CD14-positive monocyte (primary cell): ENCODE measurements at regions of chr9 and their contacts with region 1.

Region 1: GRCh38 chr9:87431517-87432236 is 66.0 kb upstream of the DAPK1 start:
- DNase-seq: no peak
- H3K4me3 ChIP-seq: no peak overlapping the region
- H3K4me3 Mint-ChIP-seq: no peak overlapping the region
- H3K27ac ChIP-seq: no peak overlapping the region
- H3K27ac Mint-ChIP-seq: no peak overlapping the region
- H3K4me1 ChIP-seq: no peaks in the 10 kb centered on the region
- H3K4me1 Mint-ChIP-seq: peaks cover 2% of the 10 kb centered on the region
- H3K27me3 ChIP-seq: no peaks in the 10 kb centered on the region
- H3K27me3 Mint-ChIP-seq: peaks cover 0 to 5% (median 0%) of the 10 kb centered on the region in 3 donors
- CTCF ChIP-seq: no peak

Region 2: DNA sequence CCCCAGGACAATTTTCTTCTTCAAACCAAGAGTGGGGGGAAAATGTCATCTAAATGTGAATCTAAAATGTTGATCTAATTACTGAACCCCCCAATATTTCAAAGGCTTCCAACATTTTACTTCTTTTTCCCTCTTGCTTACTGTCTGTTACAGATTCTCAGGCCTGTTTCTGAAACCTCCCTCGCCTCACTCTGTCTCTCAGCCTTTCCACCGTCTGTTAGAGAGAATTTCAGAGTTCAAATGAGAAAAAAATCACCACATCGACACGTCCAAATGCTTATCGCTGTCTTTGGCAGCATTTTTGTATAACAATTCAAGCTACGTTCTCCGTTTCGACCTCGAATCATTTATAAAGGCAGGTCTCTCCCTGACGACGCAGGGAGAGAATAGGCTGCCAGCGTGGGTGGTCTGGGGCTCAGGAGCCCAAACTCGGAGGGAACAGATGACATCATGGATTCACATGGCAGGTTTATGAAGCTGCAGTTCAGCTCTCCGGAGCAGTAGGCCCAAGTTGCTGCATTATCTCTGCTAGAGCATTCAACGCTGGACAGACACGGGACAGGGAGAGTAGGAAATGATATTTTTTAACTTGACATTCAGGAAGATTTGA is 624.2 kb before region 1 on chr9:
- intact Hi-C with region 1: no loop called
- DNase-seq: no peak
- H3K4me3 ChIP-seq: no peak overlapping the region
- H3K4me3 Mint-ChIP-seq: no peak overlapping the region
- H3K27ac ChIP-seq: no peak overlapping the region
- H3K27ac Mint-ChIP-seq: no peak overlapping the region
- H3K4me1 ChIP-seq: no peaks in the 10 kb centered on the region
- H3K4me1 Mint-ChIP-seq: no peaks in the 10 kb centered on the region
- H3K27me3 ChIP-seq: no peaks in the 10 kb centered on the region
- H3K27me3 Mint-ChIP-seq: peaks cover 0 to 3% (median 1%) of the 10 kb centered on the region in 3 donors
- CTCF ChIP-seq: no peak

Region 3: DNA sequence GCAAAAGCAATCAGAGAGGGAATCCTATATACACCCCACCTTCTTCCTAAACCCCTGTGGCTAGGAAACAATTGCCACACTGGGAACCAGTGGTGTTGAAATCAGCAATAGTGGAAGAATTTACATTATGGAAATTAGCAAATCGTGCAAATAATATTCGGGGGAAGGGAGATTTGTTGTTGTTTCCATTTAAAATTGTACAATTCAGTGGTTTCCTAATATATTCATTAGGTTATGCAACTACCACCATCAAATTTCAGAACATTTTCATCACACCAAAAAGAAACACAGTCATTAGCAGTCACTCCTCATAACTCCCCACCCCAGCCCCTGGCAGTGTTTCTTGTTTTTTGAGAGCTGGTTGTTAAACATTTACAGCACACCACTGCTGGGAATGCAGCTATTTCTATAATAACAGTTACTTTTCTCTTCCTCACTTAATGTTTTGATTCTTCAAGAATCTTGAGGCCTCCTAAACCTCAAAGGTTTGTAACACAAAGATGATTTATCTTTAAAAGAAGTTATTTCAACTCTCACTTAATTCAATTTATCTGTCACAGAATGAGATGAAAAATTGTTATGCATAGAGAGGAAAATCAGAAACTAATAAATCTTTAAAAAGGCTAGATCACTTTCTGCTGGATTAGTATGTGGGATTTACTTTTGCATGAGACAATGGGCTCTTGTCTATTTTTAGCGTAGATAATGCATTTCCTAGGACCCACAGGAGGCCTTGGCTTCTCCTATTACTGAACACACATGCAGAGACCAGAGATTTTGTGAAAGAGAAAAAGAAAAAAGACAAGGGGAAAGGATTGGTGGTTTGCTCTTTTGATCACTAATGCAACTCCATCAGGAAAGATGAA is 25.8 kb before region 1 on chr9:
- intact Hi-C with region 1: no loop called
- DNase-seq: peak; percentile 77 to 91 (median 86)
- H3K4me3 ChIP-seq: peak overlapping the region in 1 of 3 experiments; percentile 35
- H3K4me3 Mint-ChIP-seq: peak overlapping the region in 1 of 2 donors; percentile 54
- H3K27ac ChIP-seq: peak overlapping the region; percentile 49 to 93
- H3K27ac Mint-ChIP-seq: peak overlapping the region; percentile 91 to 97 (median 94)
- H3K4me1 ChIP-seq: peaks cover 30 to 36% of the 10 kb centered on the region in 2 donors
- H3K4me1 Mint-ChIP-seq: peaks cover 40% of the 10 kb centered on the region
- H3K27me3 ChIP-seq: no peaks in the 10 kb centered on the region
- H3K27me3 Mint-ChIP-seq: peaks cover 1 to 3% (median 2%) of the 10 kb centered on the region in 3 donors
- CTCF ChIP-seq: no peak

Region 4: DNA sequence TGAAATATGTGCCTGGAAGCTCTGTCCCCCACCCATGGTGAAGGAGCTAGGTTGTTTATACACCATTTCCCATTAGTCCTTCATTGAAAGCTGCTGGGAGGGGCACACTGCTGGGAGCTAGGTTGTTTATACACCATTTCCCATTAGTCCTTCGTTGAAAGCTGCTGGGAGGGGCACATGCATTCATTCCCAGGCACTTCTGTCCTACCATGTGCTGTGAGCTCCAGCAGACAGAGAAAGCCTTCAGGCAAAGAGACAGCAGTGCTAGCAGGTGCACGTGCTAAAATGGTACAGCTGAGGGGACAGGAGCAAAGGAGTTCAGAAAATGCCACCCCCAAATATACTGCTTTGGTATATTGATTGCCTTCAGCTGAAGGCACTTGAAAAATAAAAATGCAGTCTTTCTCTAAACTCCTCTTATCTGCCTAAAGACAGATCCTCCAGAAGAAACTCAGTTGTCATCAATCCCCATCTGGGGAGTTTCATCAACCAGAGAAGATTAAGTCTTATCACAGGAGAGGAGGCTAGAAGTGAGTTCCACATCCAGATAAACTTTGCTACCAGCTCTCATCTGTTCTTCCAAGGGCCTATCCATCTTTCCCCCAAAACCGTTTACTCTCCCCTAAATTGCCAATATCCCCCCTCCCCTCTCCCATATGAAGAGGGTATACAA is 38.3 kb after region 1 on chr9:
- intact Hi-C with region 1: loop called in 1 of 2 experiments (anchors 5 kb)
- DNase-seq: no peak
- H3K4me3 ChIP-seq: no peak overlapping the region
- H3K4me3 Mint-ChIP-seq: no peak overlapping the region
- H3K27ac ChIP-seq: no peak overlapping the region
- H3K27ac Mint-ChIP-seq: no peak overlapping the region
- H3K4me1 ChIP-seq: no peaks in the 10 kb centered on the region
- H3K4me1 Mint-ChIP-seq: no peaks in the 10 kb centered on the region
- H3K27me3 ChIP-seq: no peaks in the 10 kb centered on the region
- H3K27me3 Mint-ChIP-seq: peaks cover 0 to 4% (median 0%) of the 10 kb centered on the region in 3 donors
- CTCF ChIP-seq: no peak